ENCODE measurements at regions of chr4 and their contacts with region 1.

Region 1: GRCh38 chr4:154877110-154877760 is 96.2 kb downstream of the RBM46 start:
- DNase-seq: no peak
- H3K4me3 ChIP-seq: no peak overlapping the region
- H3K27ac ChIP-seq: no peak overlapping the region
- H3K4me1 ChIP-seq: no peaks in the 10 kb centered on the region
- H3K27me3 ChIP-seq: no peaks in the 10 kb centered on the region
- CTCF ChIP-seq: no peak
- POLR2A ChIP-seq: no peak

Region 2: GRCh38 chr4:154595807-154596206 is 281.4 kb before region 1 on chr4:
- intact Hi-C with region 1: loop called (anchors 10 kb)
- DNase-seq: no peak
- H3K4me3 ChIP-seq: no peak overlapping the region
- H3K27ac ChIP-seq: no peak overlapping the region
- H3K4me1 ChIP-seq: no peaks in the 10 kb centered on the region
- H3K27me3 ChIP-seq: no peaks in the 10 kb centered on the region
- CTCF ChIP-seq: no peak
- POLR2A ChIP-seq: no peak

Region 3: DNA sequence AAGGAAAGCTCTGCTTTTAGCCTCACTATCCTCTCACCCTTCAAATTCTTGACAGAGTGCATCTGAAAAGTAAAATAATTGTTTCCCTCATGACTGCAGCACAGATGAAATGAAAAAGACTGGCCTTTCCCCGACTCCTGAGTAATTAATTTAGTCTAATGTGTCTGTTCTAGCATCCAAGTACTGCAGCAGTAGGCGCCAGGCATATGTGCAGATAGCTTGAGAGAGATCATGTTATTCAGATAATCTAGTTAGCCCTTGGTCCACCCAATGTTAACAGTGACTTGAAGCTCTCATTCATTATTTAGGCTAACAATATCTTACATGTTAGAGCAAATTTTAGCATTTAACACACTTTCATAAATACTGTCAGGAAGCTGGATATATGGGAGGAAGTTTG is 445.5 kb after region 1 on chr4:
- intact Hi-C with region 1: loop called (anchors 5 kb)
- DNase-seq: no peak
- H3K4me3 ChIP-seq: no peak overlapping the region
- H3K27ac ChIP-seq: no peak overlapping the region
- H3K4me1 ChIP-seq: no peaks in the 10 kb centered on the region
- H3K27me3 ChIP-seq: no peaks in the 10 kb centered on the region
- CTCF ChIP-seq: no peak
- POLR2A ChIP-seq: no peak

Region 4: DNA sequence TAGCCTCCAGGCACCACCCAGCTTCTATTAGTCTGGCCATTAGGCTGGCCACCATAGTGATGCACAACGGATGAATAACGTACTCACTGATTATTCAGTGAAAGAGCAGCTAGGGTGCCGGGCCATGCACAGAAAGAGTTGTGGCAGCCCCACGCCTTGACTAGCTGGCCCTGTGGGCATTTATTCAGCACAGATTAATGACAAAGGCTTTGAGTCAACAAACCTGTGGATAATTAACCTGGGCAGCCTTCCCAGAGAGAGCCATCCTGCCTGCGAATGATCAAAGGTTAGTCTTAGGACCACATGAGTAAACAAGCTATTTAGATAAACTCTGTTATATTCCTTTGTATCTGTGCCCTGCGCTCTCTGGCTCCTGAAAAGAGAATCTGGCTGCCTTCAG is 462.4 kb after region 1 on chr4:
- intact Hi-C with region 1: loop called (anchors 5 kb)
- DNase-seq: no peak
- H3K4me3 ChIP-seq: no peak overlapping the region
- H3K27ac ChIP-seq: no peak overlapping the region
- H3K4me1 ChIP-seq: no peaks in the 10 kb centered on the region
- H3K27me3 ChIP-seq: no peaks in the 10 kb centered on the region
- CTCF ChIP-seq: no peak
- POLR2A ChIP-seq: no peak

Region 5: GRCh38 chr4:155624478-155624877 is 747.2 kb after region 1 on chr4:
- intact Hi-C with region 1: no loop called
- DNase-seq: no peak
- H3K4me3 ChIP-seq: no peak overlapping the region
- H3K27ac ChIP-seq: no peak overlapping the region
- H3K4me1 ChIP-seq: no peaks in the 10 kb centered on the region
- H3K27me3 ChIP-seq: no peaks in the 10 kb centered on the region
- CTCF ChIP-seq: no peak
- POLR2A ChIP-seq: no peak

Measured in breast epithelium (tissue), 4 donors.